ENCODE measurements at regions of chr2 and their contacts with region 1.

Region 1: GRCh38 chr2:222707689-222708525 is 36.4 kb downstream of the MOGAT1 start:
- DNase-seq: peak; percentile 76
- H3K4me3 ChIP-seq: no peak overlapping the region
- H3K27ac ChIP-seq: no peak overlapping the region
- H3K4me1 ChIP-seq: peaks cover 17% of the 10 kb centered on the region
- CTCF ChIP-seq: peak; percentile 96

Region 2: DNA sequence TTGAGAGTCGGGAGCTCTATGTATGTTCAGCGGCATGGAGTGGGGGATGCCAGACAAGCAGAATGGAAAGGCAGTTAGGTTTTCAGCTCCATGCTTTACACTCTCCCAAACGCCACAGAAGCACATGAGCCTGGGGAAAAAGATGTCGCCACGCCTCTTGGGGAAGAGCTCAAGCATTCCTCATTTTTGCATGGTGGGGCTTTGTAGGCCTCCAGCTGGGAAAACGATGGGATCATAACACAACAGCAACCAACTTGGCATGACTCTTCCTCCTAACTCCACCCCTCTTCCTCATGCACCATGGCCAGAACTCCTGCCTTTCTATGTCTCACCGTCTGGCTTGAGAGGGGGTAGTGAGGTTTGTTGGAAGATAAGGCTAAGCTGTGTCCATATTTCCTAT is 511.7 kb before region 1 on chr2:
- CTCF ChIA-PET with region 1: no interaction called
- POLR2A ChIA-PET with region 1: no interaction called
- intact Hi-C with region 1: no loop called
- DNase-seq: no peak
- H3K4me3 ChIP-seq: no peak overlapping the region
- H3K27ac ChIP-seq: no peak overlapping the region
- H3K4me1 ChIP-seq: no peaks in the 10 kb centered on the region
- CTCF ChIP-seq: no peak

Region 3: GRCh38 chr2:222792001-222792611 is 84.2 kb after region 1 on chr2:
- CTCF ChIA-PET with region 1: interaction called, 4 read pairs
- POLR2A ChIA-PET with region 1: interaction called, 4 read pairs
- intact Hi-C with region 1: loop called (anchors 2 kb)
- DNase-seq: no peak
- H3K4me3 ChIP-seq: no peak overlapping the region
- H3K27ac ChIP-seq: no peak overlapping the region
- H3K4me1 ChIP-seq: peaks cover 85% of the 10 kb centered on the region
- CTCF ChIP-seq: no peak

Region 4: DNA sequence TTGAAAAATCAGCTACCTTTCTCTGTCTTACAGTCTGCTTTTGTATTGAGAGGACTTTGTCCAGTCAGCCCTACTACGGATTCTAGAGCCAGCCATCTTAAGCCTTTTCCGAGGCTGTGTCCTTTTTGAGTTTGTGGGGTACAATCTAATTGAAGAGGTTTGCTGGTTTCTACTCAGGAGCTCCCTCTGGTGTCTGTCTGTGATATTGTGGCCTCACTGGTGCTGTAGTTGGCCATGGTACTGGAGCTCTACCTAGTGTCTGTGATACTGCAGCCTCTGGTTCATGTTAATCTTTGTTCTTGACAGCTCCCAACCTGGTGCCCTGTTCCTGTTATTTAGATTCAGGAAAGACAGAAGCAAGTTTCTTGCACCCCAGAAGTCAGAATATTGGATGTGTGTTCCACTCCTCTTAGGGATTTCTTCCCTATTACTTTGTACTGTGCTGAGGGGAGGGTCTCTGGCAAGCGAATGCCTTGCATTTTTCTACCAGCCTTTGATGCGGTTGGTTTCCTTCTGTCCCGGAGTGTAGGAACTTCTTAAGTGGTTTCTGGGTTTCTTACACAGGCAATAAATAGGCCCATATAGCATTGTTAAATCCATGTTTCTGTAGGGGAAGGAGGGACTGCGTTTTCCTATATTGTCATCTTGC is 231.4 kb after region 1 on chr2:
- CTCF ChIA-PET with region 1: no interaction called
- POLR2A ChIA-PET with region 1: interaction called, 4 read pairs
- intact Hi-C with region 1: loop called (anchors 1 kb)
- DNase-seq: peak; percentile 73
- H3K4me3 ChIP-seq: no peak overlapping the region
- H3K27ac ChIP-seq: no peak overlapping the region
- H3K4me1 ChIP-seq: no peaks in the 10 kb centered on the region
- CTCF ChIP-seq: peak; percentile 96

Measured in OCI-LY7 (cell line).